Posterior vena cava (tissue), 2 donors: ENCODE measurements at regions of chr2 and their contacts with region 1.

Region 1: DNA sequence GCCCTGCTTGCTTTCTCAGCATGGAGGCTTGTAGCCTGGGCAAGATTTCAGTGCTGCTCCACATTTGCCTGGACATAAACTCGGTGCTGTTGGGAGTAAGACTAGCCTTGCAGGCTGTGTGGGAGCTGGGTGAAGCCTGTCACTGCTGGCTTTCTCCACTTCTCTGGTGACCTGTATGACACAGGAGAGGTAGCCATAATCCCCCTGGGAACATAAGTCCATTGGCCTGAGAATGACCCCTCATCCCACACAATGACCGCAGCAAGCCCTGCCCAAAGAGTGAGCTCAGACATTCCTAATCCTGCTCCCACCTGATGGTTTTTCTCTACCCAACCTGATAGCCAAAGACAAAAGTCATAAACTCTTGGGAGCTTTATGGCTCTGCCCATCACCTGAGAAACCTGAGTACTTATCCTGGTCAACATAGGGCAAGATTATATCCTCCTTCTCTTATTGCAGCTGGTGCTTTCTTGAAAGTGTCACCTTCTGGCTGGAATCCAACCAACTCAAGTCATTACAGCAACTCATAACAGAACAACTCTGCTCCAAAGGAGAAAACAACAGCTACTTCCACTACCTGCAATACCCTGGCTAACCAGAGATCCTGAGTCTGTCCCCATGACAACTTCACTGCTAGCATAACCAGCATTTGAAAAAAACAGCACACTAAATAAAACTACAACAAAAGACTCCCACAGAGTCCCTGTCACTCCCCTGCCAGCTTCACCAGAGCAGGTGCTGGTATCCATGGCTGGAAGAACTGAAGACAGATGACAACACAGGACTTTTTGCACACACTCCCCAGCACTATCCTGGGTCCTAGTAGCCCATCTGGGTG is 834.4 kb upstream of the DDX18 start:
- DNase-seq: no peak

Region 2: DNA sequence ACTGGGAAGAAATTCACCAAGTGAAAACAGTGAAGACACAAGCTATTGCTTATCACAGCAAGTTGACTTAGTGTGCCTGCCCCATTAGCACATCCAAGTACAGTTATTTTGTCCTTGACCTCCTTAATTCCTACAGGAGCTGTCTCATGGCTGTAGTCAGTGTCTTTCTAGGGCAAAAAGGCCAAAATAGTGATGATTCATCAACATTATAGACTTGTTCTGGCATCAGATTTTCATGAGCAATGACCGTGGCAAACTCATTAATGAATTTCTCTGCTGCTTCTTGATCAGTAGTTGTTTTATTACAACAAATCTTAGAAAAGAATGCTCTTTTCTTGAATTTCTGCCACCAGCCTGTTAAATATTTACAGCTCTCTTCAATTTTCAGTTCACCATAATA is 335.0 kb before region 1 on chr2:
- intact Hi-C with region 1: loop called in 1 of 2 experiments (anchors 5 kb)
- DNase-seq: no peak

Region 3: DNA sequence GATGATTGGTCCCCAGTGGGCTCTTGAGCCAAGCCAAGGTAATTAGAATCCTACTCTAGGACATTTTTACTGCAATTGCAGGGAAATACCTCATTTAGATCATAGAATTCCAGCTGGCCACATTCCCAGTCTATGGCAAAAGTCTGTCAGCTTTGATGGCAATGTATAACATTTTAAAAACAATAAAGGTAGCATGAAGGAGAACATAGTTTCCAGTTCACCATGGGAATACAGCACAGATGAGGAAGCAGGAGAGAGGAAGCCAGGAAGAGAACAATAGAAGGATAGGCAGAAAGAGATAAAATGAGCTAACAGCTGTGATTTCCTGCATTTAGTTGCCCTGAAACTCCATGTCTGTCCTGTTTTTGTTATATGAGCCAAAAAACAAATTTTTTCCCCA is 62.9 kb before region 1 on chr2:
- intact Hi-C with region 1: no loop called
- DNase-seq: no peak